ENCODE measurements at regions of chr10 and their contacts with region 1.

Region 1: DNA sequence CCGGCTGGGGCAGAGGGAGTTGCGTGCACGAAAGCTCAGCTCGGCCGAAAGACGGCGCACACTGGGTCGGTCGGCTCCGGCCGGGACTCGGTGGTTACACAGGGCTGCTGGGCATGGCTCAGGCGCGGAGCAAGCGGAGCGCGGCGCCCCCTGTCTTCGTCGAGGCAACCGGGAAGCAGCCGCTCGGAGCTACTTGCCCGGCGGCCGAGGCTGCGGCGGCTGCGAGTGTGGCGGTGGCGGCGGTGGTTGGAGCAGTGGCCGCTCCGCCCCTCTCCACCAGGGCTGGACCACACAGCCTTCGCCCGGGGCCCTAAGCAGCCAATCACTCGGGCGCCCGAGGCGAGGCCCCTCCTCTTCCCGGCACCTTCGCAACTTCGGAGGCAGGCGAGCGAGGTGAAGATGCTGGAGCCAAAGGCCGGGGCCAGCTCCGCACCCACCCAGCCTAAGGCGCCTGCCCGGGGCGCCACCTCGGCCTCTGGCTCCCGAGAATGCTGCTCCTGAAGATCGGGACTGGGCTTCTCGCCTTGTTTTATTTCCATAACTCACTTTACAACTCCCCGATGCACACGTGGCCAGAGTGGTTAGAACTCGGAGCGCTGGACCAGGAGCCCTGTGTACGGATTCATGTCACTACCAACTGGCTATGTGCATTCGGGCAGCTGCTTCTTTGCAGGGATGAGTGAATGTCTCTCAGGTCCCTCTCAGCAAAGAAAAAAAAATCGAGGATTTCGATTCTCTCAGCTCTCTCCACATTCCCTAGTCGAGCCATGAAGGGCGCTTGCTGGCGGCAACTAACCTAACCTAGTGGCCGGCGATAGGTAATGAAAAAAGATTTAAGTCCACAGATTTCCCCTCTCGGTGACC is at the start of gene TLL2:
- ATAC-seq: peak; percentile 88 to 94 (median 91)
- H3K4me3 ChIP-seq: peak within 1 kb of the TSS; percentile 36 to 43 (median 41)
- H3K27ac ChIP-seq: no peak within 1 kb of the TSS
- H3K4me1 ChIP-seq: peaks cover 4 to 5% of the 10 kb centered on the region in 2 donors
- total RNA-seq, gene TLL2: 1.1 to 20.4 (median 2.2) TPM

Region 2: DNA sequence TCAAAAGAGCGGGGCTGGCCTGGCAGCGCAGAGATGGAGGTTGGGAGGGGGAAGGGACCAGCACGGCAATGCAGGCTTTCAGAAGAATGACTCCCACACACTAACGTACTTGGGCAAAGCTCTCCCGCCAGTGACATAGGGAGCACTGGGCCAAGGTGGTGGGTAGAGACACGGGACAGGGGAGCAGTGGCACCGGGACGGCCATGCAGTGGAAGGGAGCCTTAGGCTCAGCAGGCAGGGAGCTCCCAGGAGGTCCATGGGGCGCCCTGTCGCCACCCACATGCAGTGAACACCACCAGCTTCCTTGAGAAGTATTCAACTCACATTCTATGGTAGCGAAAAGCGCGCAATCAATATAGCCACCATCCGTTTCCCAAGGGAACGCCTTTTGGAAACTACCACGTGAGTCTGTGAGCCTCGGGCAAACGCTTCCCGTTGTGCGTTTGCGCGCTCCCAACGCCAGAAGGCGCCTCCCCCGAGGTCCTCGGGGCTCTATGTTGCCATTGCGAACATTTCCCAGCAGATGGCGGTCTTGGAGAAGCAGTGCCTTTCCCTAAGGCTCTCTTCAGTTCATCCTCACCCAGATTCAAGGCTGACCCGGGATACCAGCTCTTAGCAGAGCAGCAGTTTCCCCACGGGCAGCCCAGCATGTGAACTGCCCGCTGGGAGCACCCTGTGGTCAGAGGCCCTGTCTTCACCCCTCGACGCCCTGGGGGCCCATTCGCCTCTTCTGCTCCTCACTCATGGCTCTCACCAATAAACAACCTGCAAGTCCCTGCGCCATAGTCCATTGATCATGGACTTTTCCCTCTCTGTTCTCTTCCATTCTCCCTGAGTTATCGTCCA is 138.7 kb before region 1 on chr10:
- in situ Hi-C with region 1: loop called in 6 of 9 experiments (anchors 25 kb)
- ATAC-seq: peak; percentile 65 to 97 (median 93)
- H3K4me3 ChIP-seq: peak overlapping the region in 4 of 5 donors; percentile 4 to 14 (median 12)
- H3K27ac ChIP-seq: no peak overlapping the region
- H3K4me1 ChIP-seq: peaks cover 4% of the 10 kb centered on the region in 2 donors

Region 3: DNA sequence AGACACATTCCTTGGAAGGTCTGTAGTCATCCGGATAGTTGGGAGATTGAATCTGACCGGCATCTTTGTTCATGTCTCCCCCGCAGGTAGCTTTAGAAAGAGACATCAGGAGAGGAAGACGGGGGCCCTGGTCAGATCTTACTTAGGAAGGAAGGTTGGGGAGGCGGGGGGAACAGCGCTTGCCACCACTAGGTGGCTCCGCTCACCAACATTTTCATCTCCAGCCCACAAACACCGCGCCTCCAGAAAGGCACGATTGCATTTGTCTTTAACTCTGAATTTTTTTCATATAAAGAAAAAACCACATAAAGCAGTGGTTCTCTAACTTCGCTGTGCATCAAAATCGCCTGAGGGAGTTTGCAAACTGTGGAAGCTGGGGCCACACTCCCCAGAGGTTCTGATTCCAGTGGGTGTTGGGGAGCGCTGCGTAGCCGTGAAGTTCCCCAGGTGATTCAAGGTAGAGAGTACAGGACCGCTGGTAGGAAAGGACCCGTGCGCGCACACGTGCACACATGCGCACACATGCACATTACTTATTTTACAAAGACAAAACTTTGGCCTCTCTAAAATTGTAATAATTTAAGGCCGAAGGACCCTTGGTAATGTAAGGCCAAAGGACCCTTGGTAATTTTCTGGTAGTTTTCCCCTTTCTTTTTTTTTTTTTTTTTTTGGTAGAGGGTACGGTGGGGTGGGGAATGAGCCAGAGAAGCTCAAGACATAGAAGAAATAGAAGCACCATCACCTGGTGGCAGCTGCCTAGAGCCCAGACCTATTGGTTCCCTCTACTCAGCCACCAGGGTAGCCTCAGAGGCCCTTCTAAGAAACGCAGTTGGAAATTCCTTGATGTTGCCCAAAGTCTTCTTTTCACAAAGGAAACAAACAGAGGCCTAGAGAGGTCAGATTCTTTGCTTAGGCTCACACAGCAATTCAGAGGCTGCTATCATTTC is 117.7 kb before region 1 on chr10:
- in situ Hi-C with region 1: loop called in 7 of 9 experiments (anchors 5 to 25 kb)
- ATAC-seq: peak; percentile 67 to 93 (median 86)
- H3K4me3 ChIP-seq: no peak overlapping the region
- H3K27ac ChIP-seq: no peak overlapping the region
- H3K4me1 ChIP-seq: peaks cover 0 to 2% of the 10 kb centered on the region in 2 donors

Region 4: DNA sequence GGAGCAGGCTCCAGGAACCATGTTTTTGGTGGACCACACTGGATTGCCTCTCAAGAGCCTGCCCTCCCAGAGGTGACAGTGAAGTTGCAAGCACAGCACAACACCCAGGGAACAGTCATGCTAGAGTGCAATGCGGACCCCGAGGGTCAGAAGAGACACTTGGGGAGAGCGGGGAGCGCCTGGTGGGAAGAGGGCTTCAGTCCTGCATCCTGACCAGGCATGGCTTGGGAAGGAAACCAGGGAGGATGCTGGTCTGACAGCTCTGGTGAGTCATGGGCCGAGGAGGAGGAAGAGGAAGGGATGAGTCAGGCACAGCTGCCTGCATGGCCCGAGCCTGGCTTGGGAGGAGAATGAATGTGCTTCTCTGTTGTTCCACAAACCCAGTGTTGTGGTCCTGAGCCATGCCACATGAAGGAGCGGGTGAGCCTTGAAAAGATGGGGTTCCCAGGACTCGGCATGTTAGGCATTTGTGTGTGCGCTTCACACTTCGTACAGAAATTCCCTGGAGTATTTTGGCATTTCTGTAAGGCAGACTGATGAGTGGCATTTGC is 1029.2 kb after region 1 on chr10:
- in situ Hi-C with region 1: no loop called
- ATAC-seq: peak; percentile 44 to 80 (median 54)
- H3K4me3 ChIP-seq: no peak overlapping the region
- H3K27ac ChIP-seq: peak overlapping the region in 1 of 2 donors; percentile 63
- H3K4me1 ChIP-seq: peaks cover 24 to 37% of the 10 kb centered on the region in 2 donors